ENCODE measurements at regions of chr13 and their contacts with region 1.

Region 1: DNA sequence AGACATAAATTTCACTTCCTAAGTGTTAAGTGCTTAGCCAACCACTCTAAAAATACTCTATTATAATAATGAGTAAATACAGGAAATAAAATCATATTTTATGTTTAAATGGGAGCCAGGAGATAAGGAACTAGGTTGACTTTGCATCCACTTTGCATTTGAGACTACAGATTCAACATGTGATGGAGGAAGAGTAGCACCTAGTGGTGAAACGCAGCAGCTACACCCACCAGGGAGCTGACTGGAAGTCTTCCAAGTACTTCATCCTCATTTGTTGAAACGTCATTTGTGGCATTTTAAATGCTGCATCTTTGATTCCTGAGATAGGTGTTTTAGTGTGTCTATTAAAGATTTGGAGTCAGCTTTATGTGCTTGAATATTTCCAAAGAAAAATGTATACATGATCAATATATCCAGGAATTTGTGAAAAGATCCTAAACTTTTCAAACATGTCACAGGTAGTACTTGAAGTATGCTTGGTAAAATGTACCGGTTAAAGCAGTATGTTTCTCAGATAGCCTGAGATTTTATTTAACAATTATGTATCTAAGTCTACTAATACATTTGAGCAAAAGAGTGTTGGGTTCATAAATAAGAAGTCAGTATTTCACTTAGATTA is 17.4 kb upstream of the KCTD12 start:
- DNase-seq: peak; percentile 38 to 78 (median 71)
- ATAC-seq: peak; percentile 92
- H3K4me3 ChIP-seq: no peak overlapping the region
- H3K4me3 Mint-ChIP-seq: no peak overlapping the region
- H3K27ac ChIP-seq: no peak overlapping the region
- H3K27ac Mint-ChIP-seq: no peak overlapping the region
- H3K4me1 ChIP-seq: no peaks in the 10 kb centered on the region
- H3K4me1 Mint-ChIP-seq: no peaks in the 10 kb centered on the region
- H3K27me3 ChIP-seq: no peaks in the 10 kb centered on the region
- H3K27me3 Mint-ChIP-seq: peaks cover 14% of the 10 kb centered on the region
- CTCF ChIP-seq: peak; percentile 99

Region 2: GRCh38 chr13:75666646-75667351 is 1236.9 kb before region 1 on chr13:
- CTCF ChIA-PET with region 1: no interaction called
- POLR2A ChIA-PET with region 1: no interaction called
- intact Hi-C with region 1: loop called in 1 of 2 experiments (anchors 5 kb)
- DNase-seq: no peak
- ATAC-seq: no peak
- H3K4me3 ChIP-seq: no peak overlapping the region
- H3K4me3 Mint-ChIP-seq: no peak overlapping the region
- H3K27ac ChIP-seq: no peak overlapping the region
- H3K27ac Mint-ChIP-seq: no peak overlapping the region
- H3K4me1 ChIP-seq: no peaks in the 10 kb centered on the region
- H3K4me1 Mint-ChIP-seq: no peaks in the 10 kb centered on the region
- H3K27me3 ChIP-seq: no peaks in the 10 kb centered on the region
- H3K27me3 Mint-ChIP-seq: no peaks in the 10 kb centered on the region
- CTCF ChIP-seq: no peak

Region 3: DNA sequence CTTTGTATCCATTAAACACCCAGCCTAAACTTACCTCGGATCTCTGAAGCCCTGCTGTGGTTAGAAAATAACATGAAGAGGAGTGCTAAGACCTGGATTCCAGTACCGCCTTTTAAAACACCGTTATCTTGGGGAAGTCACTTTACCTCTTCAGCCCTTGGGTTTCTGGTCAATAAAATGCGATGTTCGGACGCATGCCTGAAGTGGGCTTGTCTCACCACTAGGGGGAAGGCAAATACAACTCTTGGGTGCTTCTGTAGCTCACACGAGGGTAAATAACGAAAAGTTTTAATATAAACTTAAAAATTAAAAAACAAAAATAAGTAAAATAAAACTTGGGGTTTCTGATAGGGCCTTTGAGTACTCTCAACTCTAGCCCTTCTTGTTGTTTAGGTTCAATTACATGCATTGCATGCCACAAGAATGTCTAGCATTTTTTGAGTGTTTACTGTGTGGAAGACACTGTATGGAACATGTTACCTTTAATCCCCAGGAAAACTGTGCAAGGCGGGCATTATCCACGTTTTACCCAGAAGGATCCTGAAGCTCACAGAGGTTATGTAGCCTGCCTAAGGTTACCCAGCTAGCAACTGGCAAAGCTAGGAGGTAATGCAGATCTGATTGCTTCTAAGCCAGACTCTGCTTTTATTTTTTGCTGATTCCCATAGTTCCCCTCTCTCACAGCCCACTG is 1027.1 kb before region 1 on chr13:
- CTCF ChIA-PET with region 1: interaction called, 11 read pairs
- POLR2A ChIA-PET with region 1: no interaction called
- intact Hi-C with region 1: loop called (anchors 1 to 2 kb)
- DNase-seq: peak; percentile 8 to 69 (median 46)
- ATAC-seq: peak; percentile 95
- H3K4me3 ChIP-seq: no peak overlapping the region
- H3K4me3 Mint-ChIP-seq: peak overlapping the region; percentile 52
- H3K27ac ChIP-seq: no peak overlapping the region
- H3K27ac Mint-ChIP-seq: no peak overlapping the region
- H3K4me1 ChIP-seq: no peaks in the 10 kb centered on the region
- H3K4me1 Mint-ChIP-seq: peaks cover 17% of the 10 kb centered on the region
- H3K27me3 ChIP-seq: no peaks in the 10 kb centered on the region
- H3K27me3 Mint-ChIP-seq: peaks cover 2% of the 10 kb centered on the region
- CTCF ChIP-seq: peak; percentile 87

Region 4: DNA sequence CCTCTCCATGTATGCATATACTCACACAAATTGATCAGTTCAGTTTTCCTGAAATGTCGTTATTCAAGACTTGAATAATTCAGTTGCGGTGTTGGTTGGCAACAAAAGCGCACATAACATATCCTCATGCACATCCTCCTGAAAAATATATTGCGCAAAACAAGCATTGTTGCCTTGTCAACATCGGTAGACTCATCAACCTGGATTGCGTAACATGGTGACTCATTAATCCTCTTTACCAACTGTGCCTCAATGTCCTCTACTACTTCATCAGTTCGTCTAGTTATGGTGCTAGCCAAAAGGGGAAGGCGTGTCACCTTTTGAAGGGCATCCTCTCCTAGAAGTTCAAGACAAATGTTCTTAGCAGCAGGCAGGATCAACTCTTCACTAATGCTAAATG is 909.8 kb before region 1 on chr13:
- CTCF ChIA-PET with region 1: no interaction called
- POLR2A ChIA-PET with region 1: no interaction called
- intact Hi-C with region 1: no loop called
- DNase-seq: no peak
- ATAC-seq: no peak
- H3K4me3 ChIP-seq: no peak overlapping the region
- H3K4me3 Mint-ChIP-seq: no peak overlapping the region
- H3K27ac ChIP-seq: no peak overlapping the region
- H3K27ac Mint-ChIP-seq: no peak overlapping the region
- H3K4me1 ChIP-seq: no peaks in the 10 kb centered on the region
- H3K4me1 Mint-ChIP-seq: no peaks in the 10 kb centered on the region
- H3K27me3 ChIP-seq: no peaks in the 10 kb centered on the region
- H3K27me3 Mint-ChIP-seq: no peaks in the 10 kb centered on the region
- CTCF ChIP-seq: no peak

Region 5: GRCh38 chr13:76266561-76266960 is 637.1 kb before region 1 on chr13:
- CTCF ChIA-PET with region 1: no interaction called
- POLR2A ChIA-PET with region 1: no interaction called
- intact Hi-C with region 1: no loop called
- DNase-seq: no peak
- ATAC-seq: no peak
- H3K4me3 ChIP-seq: no peak overlapping the region
- H3K4me3 Mint-ChIP-seq: no peak overlapping the region
- H3K27ac ChIP-seq: no peak overlapping the region
- H3K27ac Mint-ChIP-seq: no peak overlapping the region
- H3K4me1 ChIP-seq: no peaks in the 10 kb centered on the region
- H3K4me1 Mint-ChIP-seq: no peaks in the 10 kb centered on the region
- H3K27me3 ChIP-seq: no peaks in the 10 kb centered on the region
- H3K27me3 Mint-ChIP-seq: peaks cover 7% of the 10 kb centered on the region
- CTCF ChIP-seq: no peak

Region 6: DNA sequence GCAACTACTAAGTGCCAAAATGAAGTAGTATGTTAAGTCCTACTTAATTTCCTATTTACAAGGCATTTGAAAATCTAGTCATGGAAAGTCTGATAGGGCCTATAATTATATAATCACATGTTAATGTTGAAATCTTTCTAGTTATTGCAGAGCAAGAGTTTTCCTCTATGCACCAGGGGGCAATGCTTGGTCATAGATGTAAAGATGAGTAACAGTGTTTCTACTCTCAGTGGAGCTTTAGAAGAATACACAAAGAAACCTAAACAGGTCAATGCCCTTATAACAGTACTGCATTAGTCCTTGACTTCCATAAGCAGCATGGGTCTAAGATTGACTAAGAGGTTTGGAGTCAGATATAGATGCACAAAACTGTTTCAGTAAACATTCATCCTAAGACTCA is 236.1 kb before region 1 on chr13:
- CTCF ChIA-PET with region 1: interaction called, 63 read pairs
- POLR2A ChIA-PET with region 1: interaction called, 4 read pairs
- intact Hi-C with region 1: loop called (anchors 1 kb)
- DNase-seq: peak in 4 of 9 experiments; percentile 5 to 54 (median 27)
- ATAC-seq: peak; percentile 36
- H3K4me3 ChIP-seq: no peak overlapping the region
- H3K4me3 Mint-ChIP-seq: no peak overlapping the region
- H3K27ac ChIP-seq: no peak overlapping the region
- H3K27ac Mint-ChIP-seq: no peak overlapping the region
- H3K4me1 ChIP-seq: no peaks in the 10 kb centered on the region
- H3K4me1 Mint-ChIP-seq: no peaks in the 10 kb centered on the region
- H3K27me3 ChIP-seq: no peaks in the 10 kb centered on the region
- H3K27me3 Mint-ChIP-seq: no peaks in the 10 kb centered on the region
- CTCF ChIP-seq: no peak

Region 7: DNA sequence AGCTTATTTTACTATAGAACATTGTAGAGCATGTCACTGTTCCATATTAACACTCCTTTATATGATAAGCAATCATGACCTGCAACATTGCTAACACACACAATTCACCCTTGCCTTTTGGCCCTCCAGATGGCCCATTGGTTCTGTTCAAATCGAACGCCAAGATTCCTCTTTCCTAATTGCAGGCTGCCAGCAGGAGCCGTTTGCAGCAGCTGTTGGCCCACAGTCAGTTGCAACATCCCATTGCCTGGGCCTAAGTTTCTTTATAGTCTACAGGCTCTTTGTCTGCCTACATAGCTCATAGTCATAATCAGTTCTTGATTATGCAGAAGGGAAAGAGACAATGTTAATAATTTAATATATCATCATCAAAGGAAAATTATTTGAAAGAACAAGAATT is 55.1 kb before region 1 on chr13:
- CTCF ChIA-PET with region 1: no interaction called
- POLR2A ChIA-PET with region 1: no interaction called
- intact Hi-C with region 1: no loop called
- DNase-seq: no peak
- ATAC-seq: no peak
- H3K4me3 ChIP-seq: no peak overlapping the region
- H3K4me3 Mint-ChIP-seq: no peak overlapping the region
- H3K27ac ChIP-seq: no peak overlapping the region
- H3K27ac Mint-ChIP-seq: no peak overlapping the region
- H3K4me1 ChIP-seq: no peaks in the 10 kb centered on the region
- H3K4me1 Mint-ChIP-seq: no peaks in the 10 kb centered on the region
- H3K27me3 ChIP-seq: no peaks in the 10 kb centered on the region
- H3K27me3 Mint-ChIP-seq: no peaks in the 10 kb centered on the region
- CTCF ChIP-seq: no peak

Region 8: GRCh38 chr13:76980075-76980718 is 76.5 kb after region 1 on chr13:
- CTCF ChIA-PET with region 1: interaction called, 10 read pairs
- POLR2A ChIA-PET with region 1: no interaction called
- intact Hi-C with region 1: loop called in 1 of 2 experiments (anchors 5 kb)
- DNase-seq: peak; percentile 72 to 93 (median 86)
- ATAC-seq: peak; percentile 98
- H3K4me3 ChIP-seq: peak overlapping the region in 1 of 2 experiments; percentile 21
- H3K4me3 Mint-ChIP-seq: peak overlapping the region; percentile 57
- H3K27ac ChIP-seq: no peak overlapping the region
- H3K27ac Mint-ChIP-seq: no peak overlapping the region
- H3K4me1 ChIP-seq: peaks cover 4% of the 10 kb centered on the region
- H3K4me1 Mint-ChIP-seq: peaks cover 9% of the 10 kb centered on the region
- H3K27me3 ChIP-seq: peaks cover 4 to 23% of the 10 kb centered on the region in 2 experiments
- H3K27me3 Mint-ChIP-seq: peaks cover 35% of the 10 kb centered on the region
- CTCF ChIP-seq: peak; percentile 96

Region 9: GRCh38 chr13:77274126-77274525 is 370.5 kb after region 1 on chr13:
- CTCF ChIA-PET with region 1: no interaction called
- POLR2A ChIA-PET with region 1: no interaction called
- intact Hi-C with region 1: no loop called
- DNase-seq: peak in 1 of 9 experiments; percentile 20
- ATAC-seq: no peak
- H3K4me3 ChIP-seq: no peak overlapping the region
- H3K4me3 Mint-ChIP-seq: no peak overlapping the region
- H3K27ac ChIP-seq: no peak overlapping the region
- H3K27ac Mint-ChIP-seq: peak overlapping the region; percentile 66
- H3K4me1 ChIP-seq: no peaks in the 10 kb centered on the region
- H3K4me1 Mint-ChIP-seq: peaks cover 17% of the 10 kb centered on the region
- H3K27me3 ChIP-seq: no peaks in the 10 kb centered on the region
- H3K27me3 Mint-ChIP-seq: no peaks in the 10 kb centered on the region
- CTCF ChIP-seq: peak; percentile 18

Measured in CD8-positive, alpha-beta T cell (primary cell).